Calu3 (cell line): ENCODE measurements at regions of chr1 and their contacts with region 1.

Region 1: GRCh38 chr1:95309031-95309471 is 75.0 kb downstream of the RWDD3 start:
- DNase-seq: peak; percentile 30
- H3K4me3 Mint-ChIP-seq: no peak overlapping the region
- H3K27ac Mint-ChIP-seq: no peak overlapping the region
- H3K4me1 Mint-ChIP-seq: peaks cover 10% of the 10 kb centered on the region
- H3K27me3 Mint-ChIP-seq: no peaks in the 10 kb centered on the region
- CTCF ChIP-seq: peak; percentile 64

Region 2: DNA sequence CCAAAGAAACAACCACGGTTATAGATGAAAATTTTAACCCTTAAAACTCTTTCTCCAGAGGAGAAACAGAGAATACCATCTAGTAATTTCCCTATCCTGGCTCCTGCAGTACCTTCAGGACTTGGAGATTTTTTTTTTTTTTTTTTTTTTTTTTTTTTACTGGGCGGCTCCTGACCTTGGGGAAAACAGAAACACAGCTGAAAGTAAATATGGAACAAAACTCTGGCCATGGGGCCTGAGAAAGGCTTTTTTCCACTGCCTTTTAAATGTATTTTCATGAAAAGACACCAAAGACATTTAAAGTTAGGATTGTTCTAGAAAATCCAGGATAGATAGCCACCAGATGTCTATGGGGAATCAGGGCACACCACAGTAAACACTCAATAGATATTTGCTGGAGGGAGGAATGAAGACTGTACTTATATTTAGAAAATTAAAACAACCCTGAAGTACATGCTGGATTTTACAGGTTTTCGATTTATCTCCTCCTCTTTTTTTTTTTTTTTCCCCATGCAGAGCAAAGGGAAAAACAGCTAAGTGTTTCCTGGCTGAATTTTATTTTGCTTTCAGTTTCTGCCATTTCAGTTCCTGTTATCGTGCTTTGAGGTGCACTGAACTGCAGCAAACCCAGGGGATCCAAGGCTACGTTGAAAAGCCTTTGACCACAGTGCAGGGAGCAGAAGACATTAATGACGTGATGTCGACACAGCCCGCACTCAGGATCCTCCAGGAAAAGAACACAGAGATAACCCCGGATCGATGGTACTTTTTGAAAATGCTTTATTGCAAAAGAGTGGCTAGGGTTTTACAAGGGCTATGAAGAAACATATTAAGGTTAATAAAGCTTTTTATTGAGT is 346.4 kb before region 1 on chr1:
- CTCF ChIA-PET with region 1: no interaction called
- intact Hi-C with region 1: no loop called
- DNase-seq: peak; percentile 17
- H3K4me3 Mint-ChIP-seq: peak overlapping the region; percentile 63
- H3K27ac Mint-ChIP-seq: peak overlapping the region; percentile 43
- H3K4me1 Mint-ChIP-seq: no peaks in the 10 kb centered on the region
- H3K27me3 Mint-ChIP-seq: no peaks in the 10 kb centered on the region
- CTCF ChIP-seq: no peak

Region 3: DNA sequence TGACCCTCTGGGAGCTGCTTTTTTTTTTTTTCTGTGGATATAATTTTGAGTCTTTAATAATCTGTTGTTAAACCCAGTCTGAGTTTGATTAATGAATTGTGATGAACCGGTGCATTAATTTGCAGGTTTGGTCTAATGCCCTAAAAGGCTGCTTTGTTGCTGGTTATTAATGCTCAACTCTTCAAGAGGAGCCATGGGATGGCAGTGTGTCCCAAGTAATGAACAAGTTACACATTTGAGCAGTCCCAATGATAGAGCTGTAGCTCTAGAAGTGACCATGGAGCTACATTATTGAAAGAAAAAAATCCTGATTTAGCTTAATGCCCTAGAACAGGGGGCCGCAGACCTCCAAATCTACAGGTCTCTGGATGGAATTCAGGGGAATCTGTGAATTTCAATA is 22.0 kb before region 1 on chr1:
- CTCF ChIA-PET with region 1: no interaction called
- intact Hi-C with region 1: loop called (anchors 1 kb)
- DNase-seq: peak; percentile 9
- H3K4me3 Mint-ChIP-seq: no peak overlapping the region
- H3K27ac Mint-ChIP-seq: no peak overlapping the region
- H3K4me1 Mint-ChIP-seq: peaks cover 21% of the 10 kb centered on the region
- H3K27me3 Mint-ChIP-seq: no peaks in the 10 kb centered on the region
- CTCF ChIP-seq: no peak

Region 4: GRCh38 chr1:95426772-95427171 is 117.7 kb after region 1 on chr1:
- CTCF ChIA-PET with region 1: no interaction called
- intact Hi-C with region 1: no loop called
- DNase-seq: no peak
- H3K4me3 Mint-ChIP-seq: no peak overlapping the region
- H3K27ac Mint-ChIP-seq: no peak overlapping the region
- H3K4me1 Mint-ChIP-seq: no peaks in the 10 kb centered on the region
- H3K27me3 Mint-ChIP-seq: no peaks in the 10 kb centered on the region
- CTCF ChIP-seq: no peak

Region 5: GRCh38 chr1:95467036-95467435 is 158.0 kb after region 1 on chr1:
- CTCF ChIA-PET with region 1: no interaction called
- intact Hi-C with region 1: loop called (anchors 1 kb)
- DNase-seq: no peak
- H3K4me3 Mint-ChIP-seq: no peak overlapping the region
- H3K27ac Mint-ChIP-seq: no peak overlapping the region
- H3K4me1 Mint-ChIP-seq: peaks cover 23% of the 10 kb centered on the region
- H3K27me3 Mint-ChIP-seq: no peaks in the 10 kb centered on the region
- CTCF ChIP-seq: no peak

Region 6: GRCh38 chr1:95742591-95743089 is 433.6 kb after region 1 on chr1:
- CTCF ChIA-PET with region 1: no interaction called
- intact Hi-C with region 1: loop called (anchors 10 kb)
- DNase-seq: peak; percentile 71
- H3K4me3 Mint-ChIP-seq: peak overlapping the region; percentile 59
- H3K27ac Mint-ChIP-seq: peak overlapping the region; percentile 87
- H3K4me1 Mint-ChIP-seq: peaks cover 35% of the 10 kb centered on the region
- H3K27me3 Mint-ChIP-seq: no peaks in the 10 kb centered on the region
- CTCF ChIP-seq: no peak

Region 7: DNA sequence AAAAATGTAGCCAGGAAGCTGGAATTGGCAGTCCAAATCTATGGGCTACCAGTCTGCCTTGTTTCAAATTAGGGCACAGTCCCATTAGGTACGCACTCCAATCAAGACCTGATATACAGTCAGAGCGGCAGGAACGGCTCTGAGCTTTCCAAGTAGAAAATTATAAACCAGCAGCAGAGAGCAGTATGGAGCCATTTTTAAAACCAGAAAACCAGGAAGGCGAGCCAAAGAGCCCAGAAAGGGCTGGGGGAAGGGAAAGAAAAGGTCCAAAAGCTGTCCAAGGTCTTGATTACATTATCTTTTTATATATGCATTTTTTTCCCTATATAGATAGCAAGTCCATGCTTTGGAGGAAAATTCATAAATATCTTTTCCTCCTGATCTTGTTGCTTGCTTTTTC is 644.0 kb after region 1 on chr1:
- CTCF ChIA-PET with region 1: no interaction called
- intact Hi-C with region 1: loop called (anchors 10 kb)
- DNase-seq: peak; percentile 46
- H3K4me3 Mint-ChIP-seq: no peak overlapping the region
- H3K27ac Mint-ChIP-seq: no peak overlapping the region
- H3K4me1 Mint-ChIP-seq: peaks cover 23% of the 10 kb centered on the region
- H3K27me3 Mint-ChIP-seq: no peaks in the 10 kb centered on the region
- CTCF ChIP-seq: no peak

Region 8: GRCh38 chr1:96236156-96236739 is 927.2 kb after region 1 on chr1:
- CTCF ChIA-PET with region 1: no interaction called
- intact Hi-C with region 1: loop called (anchors 2 kb)
- DNase-seq: peak; percentile 42
- H3K4me3 Mint-ChIP-seq: no peak overlapping the region
- H3K27ac Mint-ChIP-seq: no peak overlapping the region
- H3K4me1 Mint-ChIP-seq: peaks cover 16% of the 10 kb centered on the region
- H3K27me3 Mint-ChIP-seq: no peaks in the 10 kb centered on the region
- CTCF ChIP-seq: peak; percentile 46